ENCODE measurements at regions of chr14 and their contacts with region 1.

Region 1: DNA sequence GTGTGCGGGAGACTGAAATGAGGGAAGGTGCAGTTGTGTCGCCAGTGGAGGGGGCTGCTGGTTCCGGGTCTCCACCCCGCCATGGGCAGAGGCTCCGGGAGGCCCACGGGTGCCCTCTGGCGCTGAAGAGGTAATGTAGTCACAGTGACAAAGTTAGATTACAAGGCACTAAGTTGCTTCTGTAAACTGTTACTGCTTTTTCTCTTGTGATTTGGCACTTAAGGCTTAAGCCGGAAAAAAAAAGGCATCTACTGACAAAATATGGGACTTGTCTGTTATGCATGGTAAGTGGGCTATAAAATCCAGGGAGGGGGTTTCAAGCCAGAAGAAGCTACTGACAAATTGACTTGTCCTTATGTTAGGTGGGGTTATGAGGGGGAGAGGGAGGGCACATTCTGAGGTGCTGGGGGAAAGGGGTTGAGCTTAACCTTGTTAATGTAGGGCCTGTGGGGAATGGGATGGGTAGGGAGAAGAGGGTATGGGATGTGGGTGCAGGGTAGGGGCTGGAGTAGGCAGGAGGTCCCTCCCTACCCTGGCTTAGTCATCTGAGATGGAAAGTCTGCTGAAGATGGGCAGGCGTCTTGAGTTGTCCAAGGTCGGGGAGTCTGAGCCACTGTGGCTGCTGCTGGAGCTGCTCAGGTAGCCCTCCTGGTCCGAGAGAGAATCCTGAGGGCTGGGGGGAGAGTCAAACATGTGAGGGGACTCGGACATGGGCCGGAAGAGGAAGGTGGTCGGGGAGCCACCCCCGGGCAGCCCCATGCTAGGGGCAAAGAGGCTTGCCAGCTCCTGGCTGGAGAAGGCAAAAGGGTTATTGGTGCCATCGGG is 3.7 kb downstream of the ZFP36L1 start:
- DNase-seq: peak; percentile 91
- H3K4me3 Mint-ChIP-seq: peak overlapping the region; percentile 89
- H3K27ac Mint-ChIP-seq: peak overlapping the region; percentile 99
- H3K4me1 Mint-ChIP-seq: peaks cover 50% of the 10 kb centered on the region
- H3K27me3 Mint-ChIP-seq: no peaks in the 10 kb centered on the region

Region 2: GRCh38 chr14:68248481-68249255 is 540.5 kb before region 1 on chr14:
- CTCF ChIA-PET with region 1: interaction called, 89 read pairs
- POLR2A ChIA-PET with region 1: interaction called, 8 read pairs
- intact Hi-C with region 1: loop called (anchors 1 kb)
- DNase-seq: no peak
- H3K4me3 Mint-ChIP-seq: no peak overlapping the region
- H3K27ac Mint-ChIP-seq: no peak overlapping the region
- H3K4me1 Mint-ChIP-seq: peaks cover 36% of the 10 kb centered on the region
- H3K27me3 Mint-ChIP-seq: no peaks in the 10 kb centered on the region

Region 3: GRCh38 chr14:68408680-68409079 is 380.5 kb before region 1 on chr14:
- CTCF ChIA-PET with region 1: interaction called, 3 read pairs
- POLR2A ChIA-PET with region 1: no interaction called
- intact Hi-C with region 1: loop called (anchors 5 kb)
- DNase-seq: no peak
- H3K4me3 Mint-ChIP-seq: no peak overlapping the region
- H3K27ac Mint-ChIP-seq: no peak overlapping the region
- H3K4me1 Mint-ChIP-seq: peaks cover 23% of the 10 kb centered on the region
- H3K27me3 Mint-ChIP-seq: no peaks in the 10 kb centered on the region

Region 4: DNA sequence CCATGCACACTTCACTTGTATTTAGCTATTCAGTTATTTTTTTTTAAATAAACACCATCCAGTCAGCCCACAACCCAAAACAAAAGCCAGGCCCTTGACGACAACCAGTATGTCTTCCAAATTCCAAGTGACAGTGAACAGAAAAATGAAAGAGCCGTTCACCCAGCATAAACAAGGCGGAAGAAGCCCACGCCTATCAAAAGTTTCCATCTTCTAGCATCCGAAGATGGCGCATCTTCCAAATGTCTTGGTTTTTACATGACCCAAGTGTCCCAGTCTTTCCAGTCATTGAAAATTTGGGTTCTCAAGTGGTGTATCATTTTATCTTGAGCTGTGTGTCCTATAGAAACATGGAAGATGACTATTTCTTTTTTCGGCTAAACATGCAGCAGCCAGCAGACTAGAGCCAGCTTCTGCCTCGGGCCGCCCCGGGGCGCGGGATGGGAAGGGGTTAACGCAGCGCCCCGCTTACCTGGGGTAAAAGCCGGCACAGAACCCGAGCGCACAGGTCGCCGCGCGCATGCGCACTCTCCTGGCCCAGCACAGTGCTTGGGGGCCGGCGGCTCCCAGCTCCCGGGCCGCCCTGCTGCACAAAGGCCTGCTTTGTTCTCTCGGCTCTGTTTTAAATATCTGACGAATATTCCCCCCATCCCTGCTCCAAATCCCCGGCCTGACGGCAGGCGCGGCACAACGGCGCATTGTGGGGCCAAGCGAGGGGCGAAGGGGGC is 161.2 kb before region 1 on chr14:
- CTCF ChIA-PET with region 1: interaction called, 20 read pairs
- POLR2A ChIA-PET with region 1: no interaction called
- intact Hi-C with region 1: no loop called
- DNase-seq: peak; percentile 61
- H3K4me3 Mint-ChIP-seq: peak overlapping the region; percentile 51
- H3K27ac Mint-ChIP-seq: no peak overlapping the region
- H3K4me1 Mint-ChIP-seq: peaks cover 14% of the 10 kb centered on the region
- H3K27me3 Mint-ChIP-seq: no peaks in the 10 kb centered on the region

Region 5: GRCh38 chr14:68718023-68718995 is 70.9 kb before region 1 on chr14:
- CTCF ChIA-PET with region 1: interaction called, 7 read pairs
- POLR2A ChIA-PET with region 1: interaction called, 4 read pairs
- intact Hi-C with region 1: loop called (anchors 1 kb)
- DNase-seq: peak; percentile 46
- H3K4me3 Mint-ChIP-seq: no peak overlapping the region
- H3K27ac Mint-ChIP-seq: no peak overlapping the region
- H3K4me1 Mint-ChIP-seq: peaks cover 40% of the 10 kb centered on the region
- H3K27me3 Mint-ChIP-seq: no peaks in the 10 kb centered on the region

Region 6: DNA sequence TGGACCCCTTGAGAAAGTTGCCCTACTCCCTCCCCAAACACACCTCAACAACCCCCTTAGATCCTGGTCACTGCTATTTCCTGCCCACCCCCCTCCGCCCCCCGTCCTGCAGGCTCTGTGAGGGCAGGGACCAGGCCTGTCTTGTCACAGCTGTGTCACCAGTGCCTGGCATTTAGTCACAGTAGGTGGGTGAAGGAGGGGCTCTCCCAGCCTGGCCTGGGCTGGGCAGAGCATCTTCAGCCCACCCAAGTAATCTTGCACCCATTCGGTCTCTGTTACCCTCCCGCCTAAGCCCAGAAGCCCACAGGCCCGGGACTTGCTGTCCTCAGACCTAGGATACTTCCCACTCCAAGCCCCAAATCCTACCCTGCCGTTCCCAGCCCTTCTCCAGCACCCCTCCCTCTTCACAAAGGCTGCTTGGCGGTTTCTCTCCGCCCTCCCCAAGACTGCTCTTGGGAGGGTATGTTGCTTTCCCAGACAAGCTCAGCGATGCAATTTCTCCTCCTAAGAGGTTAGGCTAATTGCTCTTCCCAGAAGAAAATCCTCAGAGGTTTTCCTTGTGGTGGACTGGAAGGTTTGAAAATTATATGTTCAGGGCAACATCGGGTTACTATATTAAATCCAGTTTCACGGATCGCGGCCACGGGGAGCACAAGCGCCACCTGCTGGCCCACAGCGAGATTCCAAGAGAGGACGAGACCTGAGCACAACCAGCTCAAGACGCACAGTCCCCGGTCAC is 54.4 kb after region 1 on chr14:
- CTCF ChIA-PET with region 1: interaction called, 13 read pairs
- POLR2A ChIA-PET with region 1: interaction called, 3 read pairs
- intact Hi-C with region 1: no loop called
- DNase-seq: peak; percentile 84
- H3K4me3 Mint-ChIP-seq: peak overlapping the region; percentile 2
- H3K27ac Mint-ChIP-seq: no peak overlapping the region
- H3K4me1 Mint-ChIP-seq: peaks cover 19% of the 10 kb centered on the region
- H3K27me3 Mint-ChIP-seq: peaks cover 2% of the 10 kb centered on the region

Measured in activated CD4-positive, alpha-beta memory T cell treated with anti-CD3 and anti-CD28 coated beads for 36 hours (primary cell).